ENCODE measurements at regions of chr13 and their contacts with region 1.

Region 1: DNA sequence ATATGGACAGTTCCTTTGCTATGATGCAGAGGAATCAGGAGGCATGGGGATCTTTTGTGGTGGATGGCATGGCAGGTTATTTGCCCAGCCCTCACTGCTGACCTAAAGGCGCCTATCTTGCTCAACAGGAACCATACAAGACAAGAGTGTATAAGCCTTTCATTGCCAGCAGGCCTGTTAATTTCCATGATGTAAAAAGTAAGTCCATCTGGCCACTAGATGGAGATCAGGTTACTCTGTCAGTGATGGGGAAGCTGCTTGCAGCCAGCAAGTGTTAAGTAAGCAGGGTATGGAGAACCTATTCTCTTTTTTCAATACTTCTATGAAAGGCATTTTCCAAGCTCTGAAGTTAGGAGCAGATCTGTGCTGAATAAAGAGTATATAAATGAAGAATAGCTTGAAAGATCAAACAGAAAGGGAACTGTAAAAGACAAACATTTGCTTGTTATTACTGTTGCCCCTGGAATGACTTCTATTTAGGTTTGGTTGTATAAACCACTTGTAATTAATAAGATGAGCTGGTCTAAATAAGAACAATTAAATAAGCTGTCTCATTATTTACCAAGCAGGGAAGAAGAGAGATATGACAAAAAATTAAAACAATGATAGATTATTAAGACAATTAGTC is 210.9 kb downstream of the RGCC start:
- DNase-seq: peak in 8 of 14 experiments; percentile 0 to 74 (median 28)
- ATAC-seq: peak; percentile 75
- H3K4me3 ChIP-seq: no peak overlapping the region
- H3K4me3 Mint-ChIP-seq: no peak overlapping the region
- H3K27ac ChIP-seq: no peak overlapping the region
- H3K27ac Mint-ChIP-seq: no peak overlapping the region
- H3K4me1 ChIP-seq: no peaks in the 10 kb centered on the region
- H3K4me1 Mint-ChIP-seq: no peaks in the 10 kb centered on the region
- H3K27me3 ChIP-seq: no peaks in the 10 kb centered on the region
- H3K27me3 Mint-ChIP-seq: no peaks in the 10 kb centered on the region
- CTCF ChIP-seq: peak; percentile 69

Region 2: GRCh38 chr13:41411522-41411921 is 256.7 kb before region 1 on chr13:
- CTCF ChIA-PET with region 1: no interaction called
- POLR2A ChIA-PET with region 1: no interaction called
- intact Hi-C with region 1: no loop called
- DNase-seq: peak in 9 of 14 experiments; percentile 9 to 75 (median 20)
- ATAC-seq: no peak
- H3K4me3 ChIP-seq: no peak overlapping the region
- H3K4me3 Mint-ChIP-seq: no peak overlapping the region
- H3K27ac ChIP-seq: no peak overlapping the region
- H3K27ac Mint-ChIP-seq: no peak overlapping the region
- H3K4me1 ChIP-seq: peaks cover 4% of the 10 kb centered on the region
- H3K4me1 Mint-ChIP-seq: peaks cover 5% of the 10 kb centered on the region
- H3K27me3 ChIP-seq: no peaks in the 10 kb centered on the region
- H3K27me3 Mint-ChIP-seq: no peaks in the 10 kb centered on the region
- CTCF ChIP-seq: peak; percentile 49

Region 3: GRCh38 chr13:41905600-41906254 is 237.5 kb after region 1 on chr13:
- CTCF ChIA-PET with region 1: no interaction called
- POLR2A ChIA-PET with region 1: no interaction called
- intact Hi-C with region 1: loop called in 1 of 2 experiments (anchors 10 kb)
- DNase-seq: peak in 3 of 14 experiments; percentile 49 to 60 (median 53)
- ATAC-seq: peak; percentile 99
- H3K4me3 ChIP-seq: no peak overlapping the region
- H3K4me3 Mint-ChIP-seq: no peak overlapping the region
- H3K27ac ChIP-seq: no peak overlapping the region
- H3K27ac Mint-ChIP-seq: no peak overlapping the region
- H3K4me1 ChIP-seq: no peaks in the 10 kb centered on the region
- H3K4me1 Mint-ChIP-seq: peaks cover 3% of the 10 kb centered on the region
- H3K27me3 ChIP-seq: no peaks in the 10 kb centered on the region
- H3K27me3 Mint-ChIP-seq: no peaks in the 10 kb centered on the region
- CTCF ChIP-seq: peak; percentile 70

Region 4: GRCh38 chr13:42215578-42216421 is 547.6 kb after region 1 on chr13:
- CTCF ChIA-PET with region 1: no interaction called
- POLR2A ChIA-PET with region 1: no interaction called
- intact Hi-C with region 1: loop called in 1 of 2 experiments (anchors 5 kb)
- DNase-seq: peak in 5 of 14 experiments; percentile 1 to 33 (median 28)
- ATAC-seq: no peak
- H3K4me3 ChIP-seq: no peak overlapping the region
- H3K4me3 Mint-ChIP-seq: no peak overlapping the region
- H3K27ac ChIP-seq: no peak overlapping the region
- H3K27ac Mint-ChIP-seq: no peak overlapping the region
- H3K4me1 ChIP-seq: no peaks in the 10 kb centered on the region
- H3K4me1 Mint-ChIP-seq: no peaks in the 10 kb centered on the region
- H3K27me3 ChIP-seq: no peaks in the 10 kb centered on the region
- H3K27me3 Mint-ChIP-seq: no peaks in the 10 kb centered on the region
- CTCF ChIP-seq: peak; percentile 32